Caco-2 (cell line): ENCODE measurements at regions of chr14 and their contacts with region 1.

Region 1: DNA sequence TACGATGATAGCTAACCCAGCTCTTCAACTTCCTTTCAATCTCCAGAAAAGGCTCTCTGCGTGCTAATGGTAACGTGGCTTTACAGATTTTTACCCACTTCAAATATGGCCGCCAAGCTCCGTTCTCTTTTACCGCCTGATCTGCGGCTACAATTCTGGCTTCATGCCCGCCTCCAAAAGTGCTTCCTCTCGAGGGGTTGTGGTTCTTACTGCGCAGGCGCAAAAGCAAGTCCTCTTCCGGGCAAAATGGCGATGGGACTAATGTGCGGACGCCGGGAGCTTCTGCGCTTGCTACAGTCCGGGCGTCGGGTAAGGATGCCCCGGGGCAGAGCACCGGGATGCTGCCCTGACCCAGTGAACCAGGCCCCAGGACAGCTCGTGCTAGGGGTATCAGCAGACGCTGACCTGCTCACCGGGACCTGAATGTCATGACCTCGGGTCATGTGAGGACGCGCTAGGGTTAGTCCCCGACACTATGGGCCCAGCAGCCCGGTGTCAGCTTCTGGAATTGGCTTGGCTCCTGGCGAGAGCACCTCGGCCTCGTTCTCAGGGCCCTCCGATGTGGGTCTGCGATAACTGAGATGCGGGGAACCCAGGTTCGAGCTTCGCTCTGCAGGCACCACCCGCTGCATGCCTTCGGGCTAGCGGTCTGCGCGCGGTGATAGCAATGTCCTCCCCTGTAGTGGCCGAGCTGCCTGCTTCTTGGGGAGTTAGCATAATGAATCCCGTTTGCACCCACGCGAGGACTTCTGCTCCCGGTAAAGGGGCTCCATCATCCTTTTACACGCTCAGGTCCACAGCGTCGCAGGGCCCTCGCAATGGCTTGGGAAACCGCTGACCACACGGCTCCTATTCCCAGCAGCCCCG is at the start of gene OXA1L:
- DNase-seq: peak; percentile 94 to 97
- H3K4me3 ChIP-seq: peak within 1 kb of the TSS; percentile 77
- H3K4me3 Mint-ChIP-seq: peak within 1 kb of the TSS; percentile 93
- H3K27ac Mint-ChIP-seq: peak within 1 kb of the TSS; percentile 98
- H3K4me1 ChIP-seq: no peaks in the 10 kb centered on the region
- H3K4me1 Mint-ChIP-seq: peaks cover 29% of the 10 kb centered on the region
- H3K27me3 ChIP-seq: no peaks in the 10 kb centered on the region
- H3K27me3 Mint-ChIP-seq: no peaks in the 10 kb centered on the region
- CTCF ChIP-seq: no peak
- total RNA-seq, gene OXA1L: 110 and 116 TPM in 2 replicates

Region 2: DNA sequence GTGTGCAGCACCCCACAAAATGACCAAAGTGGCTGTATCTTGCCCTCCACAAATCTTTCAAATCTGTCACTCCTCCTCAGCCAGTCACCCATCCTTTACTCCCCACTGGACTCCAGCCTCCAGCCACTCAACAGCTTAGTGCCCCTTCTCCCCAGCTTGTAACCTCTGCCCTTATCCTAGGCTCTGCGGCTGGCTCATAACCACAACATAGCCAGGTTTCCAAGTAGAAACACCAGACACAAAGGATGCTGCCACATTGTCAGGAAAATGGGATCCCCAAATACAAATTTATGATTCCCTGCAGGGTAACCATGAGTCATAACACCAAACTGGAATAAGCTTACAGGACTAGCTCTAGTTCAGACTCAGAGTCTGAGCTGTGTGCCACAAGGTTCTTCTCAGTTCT is 14.9 kb after region 1 on chr14:
- CTCF ChIA-PET with region 1: no interaction called
- POLR2A ChIA-PET with region 1: no interaction called
- intact Hi-C with region 1: no loop called
- DNase-seq: no peak
- H3K4me3 ChIP-seq: no peak overlapping the region
- H3K4me3 Mint-ChIP-seq: peak overlapping the region; percentile 5
- H3K27ac Mint-ChIP-seq: peak overlapping the region; percentile 30
- H3K4me1 ChIP-seq: peaks cover 14% of the 10 kb centered on the region
- H3K4me1 Mint-ChIP-seq: peaks cover 10% of the 10 kb centered on the region
- H3K27me3 ChIP-seq: no peaks in the 10 kb centered on the region
- H3K27me3 Mint-ChIP-seq: no peaks in the 10 kb centered on the region
- CTCF ChIP-seq: no peak

Region 3: DNA sequence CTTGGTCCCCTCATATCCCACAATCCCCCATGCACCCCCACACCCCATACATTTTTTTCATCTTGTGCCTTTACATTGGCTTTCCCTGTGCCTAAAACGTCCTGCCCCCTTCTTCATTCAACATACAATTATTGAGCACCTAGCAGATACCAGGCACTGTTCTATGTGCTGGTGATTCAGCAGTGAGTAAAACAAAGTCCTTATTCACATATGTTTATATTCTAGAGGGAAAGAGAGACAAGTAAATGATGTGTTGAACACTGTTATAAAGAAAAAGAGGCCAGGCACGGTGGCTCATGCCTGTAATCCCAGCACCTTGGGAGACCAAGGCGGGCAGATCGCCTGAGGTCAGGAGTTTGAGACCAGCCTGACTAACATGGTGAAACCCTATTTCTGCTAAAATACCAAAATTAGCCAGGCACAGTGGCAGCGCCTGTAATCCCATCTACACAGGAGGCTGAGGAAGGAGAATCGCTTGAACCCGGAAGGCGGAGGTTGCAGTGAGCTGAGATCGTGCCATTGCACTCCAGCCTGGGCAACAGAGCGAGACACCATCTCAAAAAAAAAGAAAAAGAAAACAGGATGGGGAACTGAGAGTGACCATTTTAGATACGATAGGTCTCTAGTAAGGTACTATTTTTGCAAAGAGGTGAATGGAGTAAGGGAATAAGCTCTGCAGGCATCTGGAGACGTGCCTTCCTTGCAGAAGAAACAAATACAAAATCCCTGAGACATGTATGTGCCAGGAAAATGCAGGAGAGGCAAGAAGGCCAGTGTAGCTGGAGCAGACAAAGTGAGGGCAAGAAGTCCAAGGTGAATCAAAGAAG is 36.4 kb after region 1 on chr14:
- CTCF ChIA-PET with region 1: interaction called, 7 read pairs
- POLR2A ChIA-PET with region 1: interaction called, 10 read pairs
- intact Hi-C with region 1: no loop called
- DNase-seq: no peak
- H3K4me3 ChIP-seq: no peak overlapping the region
- H3K4me3 Mint-ChIP-seq: no peak overlapping the region
- H3K27ac Mint-ChIP-seq: peak overlapping the region; percentile 62
- H3K4me1 ChIP-seq: peaks cover 67% of the 10 kb centered on the region
- H3K4me1 Mint-ChIP-seq: peaks cover 73% of the 10 kb centered on the region
- H3K27me3 ChIP-seq: no peaks in the 10 kb centered on the region
- H3K27me3 Mint-ChIP-seq: no peaks in the 10 kb centered on the region
- CTCF ChIP-seq: no peak